Heart left ventricle (tissue), 16 donors: ENCODE measurements at regions of chr7 and their contacts with region 1.

Region 1: GRCh38 chr7:144709066-144709465 is 126.8 kb downstream of the TPK1 start:
- DNase-seq: no peak
- ATAC-seq: no peak
- H3K4me3 ChIP-seq: no peak overlapping the region
- H3K27ac ChIP-seq: no peak overlapping the region
- H3K4me1 ChIP-seq: no peaks in the 10 kb centered on the region
- H3K27me3 ChIP-seq: no peaks in the 10 kb centered on the region
- CTCF ChIP-seq: no peak
- POLR2A ChIP-seq: no peak

Region 2: GRCh38 chr7:144908943-144909556 is 200.0 kb after region 1 on chr7:
- intact Hi-C with region 1: no loop called
- DNase-seq: no peak
- ATAC-seq: no peak
- H3K4me3 ChIP-seq: no peak overlapping the region
- H3K27ac ChIP-seq: no peak overlapping the region
- H3K4me1 ChIP-seq: no peaks in the 10 kb centered on the region
- H3K27me3 ChIP-seq: peaks cover 0 to 2% (median 0%) of the 10 kb centered on the region in 9 donors
- CTCF ChIP-seq: no peak
- POLR2A ChIP-seq: no peak

Region 3: GRCh38 chr7:145065473-145065872 is 356.4 kb after region 1 on chr7:
- intact Hi-C with region 1: loop called in 1 of 10 experiments (anchors 5 kb)
- DNase-seq: no peak
- ATAC-seq: no peak
- H3K4me3 ChIP-seq: no peak overlapping the region
- H3K27ac ChIP-seq: no peak overlapping the region
- H3K4me1 ChIP-seq: no peaks in the 10 kb centered on the region
- H3K27me3 ChIP-seq: no peaks in the 10 kb centered on the region
- CTCF ChIP-seq: no peak
- POLR2A ChIP-seq: no peak